Activated naive CD4-positive, alpha-beta T cell treated with anti-CD3 and anti-CD28 coated beads for 36 hours (primary cell): ENCODE measurements at regions of chr5 and their contacts with region 1.

Region 1: GRCh38 chr5:77437194-77437593 is 54.9 kb downstream of the WDR41 start:
- DNase-seq: peak; percentile 21
- H3K4me3 Mint-ChIP-seq: no peak overlapping the region
- H3K27ac Mint-ChIP-seq: no peak overlapping the region
- H3K4me1 Mint-ChIP-seq: no peaks in the 10 kb centered on the region
- H3K27me3 Mint-ChIP-seq: no peaks in the 10 kb centered on the region

Region 2: DNA sequence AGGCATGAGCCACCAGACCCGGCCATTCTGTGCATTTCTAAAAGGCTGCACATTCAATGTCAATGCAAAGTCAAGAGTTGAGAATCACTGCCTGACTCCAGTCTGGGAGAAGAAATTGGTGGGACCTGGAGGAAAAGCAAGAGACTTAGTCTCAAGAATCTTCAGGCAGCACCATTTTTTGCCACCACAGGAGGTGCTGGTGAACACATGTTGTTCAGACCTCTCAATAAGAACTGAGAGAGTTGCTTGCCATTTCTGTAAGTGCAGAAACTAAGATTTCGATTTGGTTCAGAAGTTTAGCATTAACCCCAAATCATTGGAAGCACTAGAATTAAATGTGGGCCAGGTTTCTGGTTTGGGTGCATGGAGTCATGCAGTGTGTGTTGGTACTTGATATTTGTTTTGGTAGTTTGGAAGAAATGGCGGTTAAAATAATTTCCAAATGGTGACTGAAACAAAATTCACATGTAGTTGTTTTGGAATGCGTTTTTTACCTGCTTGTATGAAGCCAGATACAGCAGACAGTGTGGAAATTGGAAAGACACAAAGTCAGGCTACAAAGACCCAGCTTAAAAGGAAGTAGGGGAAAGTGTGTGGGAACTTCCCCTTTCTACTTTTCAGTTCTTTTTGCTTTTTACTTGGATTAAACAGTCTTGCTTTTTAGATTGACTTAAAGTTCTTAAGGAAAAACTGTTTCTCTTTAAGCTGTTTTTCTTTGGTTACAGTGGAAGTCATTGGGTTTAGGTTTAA is 206.3 kb before region 1 on chr5:
- CTCF ChIA-PET with region 1: no interaction called
- intact Hi-C with region 1: loop called (anchors 5 kb)
- DNase-seq: peak; percentile 36
- H3K4me3 Mint-ChIP-seq: no peak overlapping the region
- H3K27ac Mint-ChIP-seq: no peak overlapping the region
- H3K4me1 Mint-ChIP-seq: peaks cover 6% of the 10 kb centered on the region
- H3K27me3 Mint-ChIP-seq: peaks cover 28% of the 10 kb centered on the region

Region 3: DNA sequence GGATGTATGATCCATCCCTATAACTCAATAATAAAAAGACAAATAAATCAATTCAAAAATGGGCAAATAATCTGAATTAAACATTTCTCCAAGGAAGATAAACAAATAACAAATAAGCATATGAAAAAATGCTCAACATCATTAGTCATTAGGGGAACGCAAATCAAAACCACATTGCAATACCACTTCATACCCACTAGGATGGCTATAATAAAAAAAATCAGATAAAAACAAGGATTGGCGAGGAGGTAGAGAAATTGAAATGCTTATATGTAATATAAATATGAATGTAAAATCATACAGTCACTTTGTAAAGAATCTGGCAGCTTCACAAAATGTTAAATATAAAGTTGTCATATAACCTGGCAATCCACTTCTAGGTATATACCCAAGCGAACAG is 391.3 kb after region 1 on chr5:
- CTCF ChIA-PET with region 1: no interaction called
- intact Hi-C with region 1: no loop called
- DNase-seq: no peak
- H3K4me3 Mint-ChIP-seq: no peak overlapping the region
- H3K27ac Mint-ChIP-seq: no peak overlapping the region
- H3K4me1 Mint-ChIP-seq: no peaks in the 10 kb centered on the region
- H3K27me3 Mint-ChIP-seq: peaks cover 23% of the 10 kb centered on the region